ENCODE measurements at regions of chr18 and their contacts with region 1.

Region 1: GRCh38 chr18:21203096-21203495 is 38.9 kb upstream of the GREB1L start:
- DNase-seq: no peak
- H3K27ac ChIP-seq: no peak overlapping the region
- CTCF ChIP-seq: no peak

Region 2: GRCh38 chr18:21463718-21464117 is 260.6 kb after region 1 on chr18:
- CTCF ChIA-PET with region 1: interaction called, 10 read pairs
- POLR2A ChIA-PET with region 1: no interaction called
- DNase-seq: no peak
- H3K27ac ChIP-seq: no peak overlapping the region
- CTCF ChIP-seq: no peak

Measured in RWPE1 (cell line).